CD4-positive, alpha-beta memory T cell (primary cell): ENCODE measurements at regions of chr11 and their contacts with region 1.

Region 1: DNA sequence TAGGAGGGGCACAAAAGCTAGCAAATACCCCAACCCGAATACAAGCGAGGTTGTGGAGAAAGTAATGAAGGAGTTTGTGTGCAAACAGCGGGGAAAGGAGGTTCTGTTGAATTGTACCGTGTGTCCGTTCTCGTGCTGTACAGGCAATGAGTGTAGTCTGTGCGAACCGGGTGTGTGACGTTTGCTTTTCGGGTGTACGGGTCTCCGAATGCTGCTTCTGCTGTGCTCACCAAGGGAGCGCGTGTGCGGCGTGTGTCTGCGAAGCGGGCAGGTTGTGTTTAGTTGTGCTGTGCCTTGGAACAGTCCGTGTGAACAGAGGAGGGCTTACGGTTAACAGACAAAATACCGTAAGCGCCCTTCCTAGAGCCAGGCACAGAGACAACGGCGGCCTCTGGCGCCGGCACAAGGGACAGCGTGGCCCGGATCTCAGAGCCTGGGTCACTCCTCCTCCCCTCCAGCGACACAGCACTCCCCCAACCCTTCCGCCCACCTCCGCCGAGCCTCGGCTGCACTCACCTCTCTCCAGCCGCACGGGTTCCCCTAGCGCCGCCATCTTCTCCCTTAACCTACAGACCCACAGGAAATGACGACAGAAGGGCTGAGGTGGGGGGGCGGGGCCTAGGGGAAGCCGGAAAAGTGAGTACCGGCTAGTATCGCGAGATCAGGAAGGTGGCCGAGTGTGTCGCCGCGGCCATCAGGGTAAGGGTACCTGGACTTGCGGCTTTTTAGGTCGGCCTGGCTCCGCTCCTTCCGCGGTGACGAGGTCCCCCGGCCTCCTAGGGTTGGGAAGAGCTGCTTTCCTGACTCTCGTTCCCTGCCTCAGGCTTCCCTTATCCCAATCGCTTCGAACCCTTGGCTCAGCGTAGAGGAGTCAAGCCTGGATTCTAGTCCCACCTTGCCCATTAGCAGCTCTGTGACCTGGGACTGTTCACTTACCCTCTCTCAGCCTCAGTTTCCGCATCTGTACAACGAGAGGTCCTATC is at the start of gene LIN7C:
- DNase-seq: peak; percentile 89 to 98 (median 93)
- H3K4me3 ChIP-seq: peak within 1 kb of the TSS; percentile 95 to 98
- H3K4me3 Mint-ChIP-seq: peak within 1 kb of the TSS; percentile 99 to 100 (median 100)
- H3K27ac ChIP-seq: peak within 1 kb of the TSS; percentile 80
- H3K27ac Mint-ChIP-seq: peak within 1 kb of the TSS; percentile 95 to 100 (median 100)
- H3K4me1 ChIP-seq: peaks cover 49% of the 10 kb centered on the region
- H3K4me1 Mint-ChIP-seq: peaks cover 34 to 65% (median 47%) of the 10 kb centered on the region in 4 donors
- H3K27me3 ChIP-seq: no peaks in the 10 kb centered on the region
- H3K27me3 Mint-ChIP-seq: no peaks in the 10 kb centered on the region
- total RNA-seq, gene LIN7C: 30.7 to 31.8 TPM

Region 2: GRCh38 chr11:27423125-27423524 is 83.4 kb before region 1 on chr11:
- CTCF ChIA-PET with region 1: no interaction called
- POLR2A ChIA-PET with region 1: no interaction called
- intact Hi-C with region 1: no loop called
- DNase-seq: no peak
- H3K4me3 ChIP-seq: no peak overlapping the region
- H3K4me3 Mint-ChIP-seq: no peak overlapping the region
- H3K27ac ChIP-seq: no peak overlapping the region
- H3K27ac Mint-ChIP-seq: no peak overlapping the region
- H3K4me1 ChIP-seq: no peaks in the 10 kb centered on the region
- H3K4me1 Mint-ChIP-seq: no peaks in the 10 kb centered on the region
- H3K27me3 ChIP-seq: no peaks in the 10 kb centered on the region
- H3K27me3 Mint-ChIP-seq: peaks cover 0 to 4% of the 10 kb centered on the region in 2 donors

Region 3: DNA sequence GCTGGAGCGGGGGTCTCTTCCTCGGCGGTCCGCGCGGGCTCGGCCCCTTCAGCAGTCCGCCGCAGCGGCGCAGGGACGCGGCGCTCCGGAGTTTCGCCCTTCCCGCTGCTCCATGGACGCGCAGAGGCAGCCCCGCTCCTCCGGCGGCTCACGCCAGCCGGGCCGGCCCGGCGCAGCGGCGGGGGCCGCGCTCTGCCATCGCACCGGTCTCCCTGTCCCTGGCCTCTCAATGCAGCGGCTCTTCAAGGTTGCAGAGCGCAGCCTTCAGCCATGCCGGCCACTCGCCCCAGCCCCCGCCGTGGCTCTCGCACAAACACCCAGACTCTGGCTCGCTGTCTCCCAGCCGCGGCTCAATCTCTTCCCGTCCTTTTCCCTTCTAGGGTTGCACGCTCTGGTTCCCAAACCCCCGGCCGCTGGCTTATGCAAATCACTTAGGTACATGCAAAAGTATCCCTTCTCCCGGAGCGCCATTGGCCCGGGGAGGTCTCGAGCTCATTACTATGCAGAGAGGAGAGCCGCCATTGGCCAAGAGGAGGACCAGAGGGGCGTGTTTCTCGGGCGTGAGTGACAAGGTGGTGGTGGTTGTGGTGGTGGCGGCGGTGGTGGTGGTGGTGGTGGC is 34.0 kb before region 1 on chr11 and contains the start of gene LGR4:
- CTCF ChIA-PET with region 1: interaction called, 4 read pairs
- POLR2A ChIA-PET with region 1: interaction called, 3 read pairs
- intact Hi-C with region 1: loop called (anchors 1 kb)
- DNase-seq: peak; percentile 68 to 81 (median 70)
- H3K4me3 ChIP-seq: peak within 1 kb of the TSS; percentile 27 to 65
- H3K4me3 Mint-ChIP-seq: peak within 1 kb of the TSS; percentile 94 to 99 (median 95)
- H3K27ac ChIP-seq: no peak within 1 kb of the TSS
- H3K27ac Mint-ChIP-seq: peak within 1 kb of the TSS; percentile 1 to 93 (median 81)
- H3K4me1 ChIP-seq: peaks cover 13% of the 10 kb centered on the region
- H3K4me1 Mint-ChIP-seq: peaks cover 11 to 27% (median 18%) of the 10 kb centered on the region in 4 donors
- H3K27me3 ChIP-seq: no peaks in the 10 kb centered on the region
- H3K27me3 Mint-ChIP-seq: peaks cover 3 to 12% of the 10 kb centered on the region in 2 donors
- total RNA-seq, gene LGR4: 0.58 to 1.6 TPM

Region 4: GRCh38 chr11:27535103-27535502 is 28.6 kb after region 1 on chr11:
- CTCF ChIA-PET with region 1: no interaction called
- POLR2A ChIA-PET with region 1: no interaction called
- intact Hi-C with region 1: no loop called
- DNase-seq: no peak
- H3K4me3 ChIP-seq: no peak overlapping the region
- H3K4me3 Mint-ChIP-seq: no peak overlapping the region
- H3K27ac ChIP-seq: no peak overlapping the region
- H3K27ac Mint-ChIP-seq: no peak overlapping the region
- H3K4me1 ChIP-seq: no peaks in the 10 kb centered on the region
- H3K4me1 Mint-ChIP-seq: peaks cover 0 to 2% (median 0%) of the 10 kb centered on the region in 4 donors
- H3K27me3 ChIP-seq: no peaks in the 10 kb centered on the region
- H3K27me3 Mint-ChIP-seq: no peaks in the 10 kb centered on the region

Region 5: GRCh38 chr11:28107748-28108618 is 601.5 kb after region 1 on chr11 and contains the starts of genes KIF18A and METTL15:
- CTCF ChIA-PET with region 1: no interaction called
- POLR2A ChIA-PET with region 1: no interaction called
- intact Hi-C with region 1: loop called (anchors 1 kb)
- DNase-seq: peak; percentile 96 to 98 (median 97)
- H3K4me3 ChIP-seq: peak within 1 kb of the TSS; percentile 64 to 74
- H3K4me3 Mint-ChIP-seq: peak within 1 kb of the TSS; percentile 91 to 99 (median 94)
- H3K27ac ChIP-seq: peak within 1 kb of the TSS; percentile 88
- H3K27ac Mint-ChIP-seq: peak within 1 kb of the TSS; percentile 95 to 100 (median 99)
- H3K4me1 ChIP-seq: peaks cover 62% of the 10 kb centered on the region
- H3K4me1 Mint-ChIP-seq: peaks cover 36 to 71% (median 54%) of the 10 kb centered on the region in 4 donors
- H3K27me3 ChIP-seq: no peaks in the 10 kb centered on the region
- H3K27me3 Mint-ChIP-seq: no peaks in the 10 kb centered on the region
- total RNA-seq, gene KIF18A: 0.81 to 1.1 TPM
- total RNA-seq, gene METTL15: 11.8 to 14.0 TPM